Caco-2 (cell line): ENCODE measurements at regions of chr5 and their contacts with region 1.

Region 1: GRCh38 chr5:80275347-80275746 is 19.5 kb upstream of the SERINC5 start:
- DNase-seq: peak in 1 of 2 experiments; percentile 43
- H3K4me3 ChIP-seq: no peak overlapping the region
- H3K4me3 Mint-ChIP-seq: no peak overlapping the region
- H3K27ac Mint-ChIP-seq: no peak overlapping the region
- H3K4me1 ChIP-seq: no peaks in the 10 kb centered on the region
- H3K4me1 Mint-ChIP-seq: peaks cover 7% of the 10 kb centered on the region
- H3K27me3 ChIP-seq: no peaks in the 10 kb centered on the region
- H3K27me3 Mint-ChIP-seq: no peaks in the 10 kb centered on the region
- CTCF ChIP-seq: peak; percentile 53 to 62

Region 2: DNA sequence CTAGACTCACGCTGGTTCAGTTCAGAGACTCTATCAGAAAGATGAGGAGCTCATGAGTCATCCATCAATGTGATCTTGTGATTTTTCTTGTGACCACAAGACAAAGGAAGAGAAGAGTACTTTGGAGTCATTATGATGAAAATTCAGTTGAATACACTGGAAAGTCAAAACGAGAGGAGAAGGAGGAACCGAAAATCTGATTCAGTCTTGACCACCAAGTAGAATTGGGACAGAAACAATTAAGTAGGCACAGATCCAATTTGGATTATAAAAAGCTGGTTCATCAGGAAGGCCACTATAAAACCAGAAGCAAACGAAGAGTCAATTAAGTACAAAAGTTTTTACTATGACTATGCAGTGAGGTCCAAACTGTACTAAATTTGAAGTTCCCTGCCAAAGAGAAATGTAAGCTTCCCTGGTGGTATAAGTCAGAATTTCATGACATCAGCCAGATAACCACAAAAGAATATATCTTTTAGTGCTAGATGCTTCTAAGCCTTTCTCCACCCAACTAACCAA is 149.3 kb before region 1 on chr5:
- CTCF ChIA-PET with region 1: no interaction called
- POLR2A ChIA-PET with region 1: no interaction called
- intact Hi-C with region 1: loop called (anchors 1 kb)
- DNase-seq: no peak
- H3K4me3 ChIP-seq: no peak overlapping the region
- H3K4me3 Mint-ChIP-seq: no peak overlapping the region
- H3K27ac Mint-ChIP-seq: peak overlapping the region; percentile 5
- H3K4me1 ChIP-seq: peaks cover 36% of the 10 kb centered on the region
- H3K4me1 Mint-ChIP-seq: peaks cover 31% of the 10 kb centered on the region
- H3K27me3 ChIP-seq: no peaks in the 10 kb centered on the region
- H3K27me3 Mint-ChIP-seq: no peaks in the 10 kb centered on the region
- CTCF ChIP-seq: peak in 1 of 2 experiments; percentile 17

Region 3: DNA sequence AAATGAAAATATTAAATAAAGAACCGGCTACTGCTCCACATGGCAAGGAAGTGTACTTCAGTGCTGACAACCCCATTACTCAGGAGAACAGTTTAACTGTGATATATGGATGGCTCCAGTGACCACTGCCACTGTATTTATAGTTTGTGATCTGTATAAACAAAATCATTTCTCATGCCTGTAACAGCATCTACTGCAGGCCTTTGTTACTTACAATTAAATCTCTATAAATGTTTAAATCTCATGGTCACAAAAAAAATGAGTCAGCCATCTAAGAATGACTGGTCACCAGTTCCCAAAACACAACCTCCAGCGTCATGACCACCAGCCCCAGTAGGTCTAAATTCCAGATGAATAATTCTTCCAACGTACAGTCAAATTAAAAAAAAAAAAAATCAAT is 44.1 kb before region 1 on chr5:
- CTCF ChIA-PET with region 1: no interaction called
- POLR2A ChIA-PET with region 1: no interaction called
- intact Hi-C with region 1: no loop called
- DNase-seq: no peak
- H3K4me3 ChIP-seq: no peak overlapping the region
- H3K4me3 Mint-ChIP-seq: no peak overlapping the region
- H3K27ac Mint-ChIP-seq: peak overlapping the region; percentile 63
- H3K4me1 ChIP-seq: peaks cover 22% of the 10 kb centered on the region
- H3K4me1 Mint-ChIP-seq: peaks cover 31% of the 10 kb centered on the region
- H3K27me3 ChIP-seq: no peaks in the 10 kb centered on the region
- H3K27me3 Mint-ChIP-seq: no peaks in the 10 kb centered on the region
- CTCF ChIP-seq: no peak

Region 4: DNA sequence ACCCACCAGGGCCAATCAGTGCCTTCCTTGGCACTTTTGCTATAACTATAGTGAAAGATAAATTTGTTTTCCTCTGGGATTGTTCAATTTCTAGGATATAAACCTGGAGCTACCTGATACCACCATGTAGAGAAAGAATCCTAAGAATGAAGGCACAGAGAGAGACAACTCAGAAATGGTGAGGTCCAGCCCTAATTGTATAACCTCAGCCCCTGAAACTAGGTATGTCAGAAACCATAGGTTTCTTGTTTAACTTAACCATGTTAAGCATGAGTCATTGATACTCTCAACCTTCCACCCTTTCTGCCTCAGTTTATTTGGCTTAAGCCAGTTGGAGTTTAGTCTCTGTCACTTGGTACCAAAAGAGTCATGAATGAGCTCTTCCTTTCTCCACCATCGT is 39.9 kb after region 1 on chr5:
- CTCF ChIA-PET with region 1: no interaction called
- POLR2A ChIA-PET with region 1: no interaction called
- intact Hi-C with region 1: no loop called
- DNase-seq: no peak
- H3K4me3 ChIP-seq: no peak overlapping the region
- H3K4me3 Mint-ChIP-seq: no peak overlapping the region
- H3K27ac Mint-ChIP-seq: no peak overlapping the region
- H3K4me1 ChIP-seq: no peaks in the 10 kb centered on the region
- H3K4me1 Mint-ChIP-seq: no peaks in the 10 kb centered on the region
- H3K27me3 ChIP-seq: no peaks in the 10 kb centered on the region
- H3K27me3 Mint-ChIP-seq: peaks cover 4% of the 10 kb centered on the region
- CTCF ChIP-seq: no peak

Region 5: GRCh38 chr5:80346055-80346454 is 70.7 kb after region 1 on chr5:
- CTCF ChIA-PET with region 1: no interaction called
- POLR2A ChIA-PET with region 1: no interaction called
- intact Hi-C with region 1: no loop called
- DNase-seq: peak; percentile 59 to 61
- H3K4me3 ChIP-seq: no peak overlapping the region
- H3K4me3 Mint-ChIP-seq: no peak overlapping the region
- H3K27ac Mint-ChIP-seq: no peak overlapping the region
- H3K4me1 ChIP-seq: no peaks in the 10 kb centered on the region
- H3K4me1 Mint-ChIP-seq: no peaks in the 10 kb centered on the region
- H3K27me3 ChIP-seq: no peaks in the 10 kb centered on the region
- H3K27me3 Mint-ChIP-seq: no peaks in the 10 kb centered on the region
- CTCF ChIP-seq: peak; percentile 61 to 83

Region 6: DNA sequence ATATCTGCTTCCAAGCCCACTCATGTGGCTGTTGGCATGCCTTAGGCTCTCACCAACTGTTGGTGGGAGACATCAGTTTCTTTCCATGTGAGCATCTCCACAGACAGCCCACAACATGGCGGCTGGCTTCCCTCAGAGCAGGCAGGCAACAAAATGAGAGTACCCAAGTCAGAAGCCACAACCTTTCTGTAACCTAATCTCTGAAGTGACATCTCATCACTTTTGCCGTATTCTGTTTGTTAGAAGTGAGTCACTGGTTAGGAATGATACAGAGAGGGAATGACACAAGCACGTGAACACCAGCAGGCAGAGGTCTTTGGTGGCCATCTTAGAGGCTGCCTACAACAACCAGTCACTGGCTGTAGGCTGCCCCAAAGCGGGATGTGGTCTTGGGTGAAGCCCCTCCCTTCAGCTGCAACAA is 596.2 kb after region 1 on chr5:
- CTCF ChIA-PET with region 1: no interaction called
- POLR2A ChIA-PET with region 1: no interaction called
- intact Hi-C with region 1: no loop called
- DNase-seq: peak; percentile 21 to 55
- H3K4me3 ChIP-seq: no peak overlapping the region
- H3K4me3 Mint-ChIP-seq: no peak overlapping the region
- H3K27ac Mint-ChIP-seq: peak overlapping the region; percentile 71
- H3K4me1 ChIP-seq: peaks cover 10% of the 10 kb centered on the region
- H3K4me1 Mint-ChIP-seq: peaks cover 24% of the 10 kb centered on the region
- H3K27me3 ChIP-seq: no peaks in the 10 kb centered on the region
- H3K27me3 Mint-ChIP-seq: no peaks in the 10 kb centered on the region
- CTCF ChIP-seq: no peak